Posterior cingulate gyrus (tissue), 11 donors: ENCODE measurements at regions of chr14 and their contacts with region 1.

Region 1: DNA sequence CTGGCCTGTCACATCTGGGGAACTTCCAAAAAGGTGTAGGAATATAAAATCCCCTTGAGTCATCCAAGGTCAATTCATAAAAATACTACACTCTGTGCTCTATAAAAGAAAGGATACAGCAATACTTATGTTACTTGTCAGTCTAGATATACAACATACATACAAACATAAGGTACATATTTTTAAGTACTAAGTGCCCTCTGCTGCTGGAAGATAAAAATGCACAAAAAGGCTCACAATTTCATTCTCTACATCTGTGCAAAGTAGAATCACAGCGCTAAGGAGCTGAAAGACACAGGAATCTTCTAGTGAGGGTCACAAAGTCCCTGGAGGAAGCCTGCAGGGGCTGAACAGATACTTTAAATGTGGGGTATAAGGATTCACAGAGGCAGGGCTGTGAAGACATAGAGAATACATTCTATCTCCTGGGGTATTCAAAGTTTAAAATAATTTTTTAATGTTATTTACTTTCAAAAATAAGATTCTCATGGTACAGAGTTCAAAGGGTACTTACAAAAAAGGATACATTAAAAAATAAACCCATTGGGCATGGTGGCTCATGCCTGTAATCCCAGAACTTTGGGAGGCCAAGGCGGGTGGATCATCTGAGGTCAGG is 10.2 kb upstream of the GOLGA5 start:
- DNase-seq: no peak

Region 2: DNA sequence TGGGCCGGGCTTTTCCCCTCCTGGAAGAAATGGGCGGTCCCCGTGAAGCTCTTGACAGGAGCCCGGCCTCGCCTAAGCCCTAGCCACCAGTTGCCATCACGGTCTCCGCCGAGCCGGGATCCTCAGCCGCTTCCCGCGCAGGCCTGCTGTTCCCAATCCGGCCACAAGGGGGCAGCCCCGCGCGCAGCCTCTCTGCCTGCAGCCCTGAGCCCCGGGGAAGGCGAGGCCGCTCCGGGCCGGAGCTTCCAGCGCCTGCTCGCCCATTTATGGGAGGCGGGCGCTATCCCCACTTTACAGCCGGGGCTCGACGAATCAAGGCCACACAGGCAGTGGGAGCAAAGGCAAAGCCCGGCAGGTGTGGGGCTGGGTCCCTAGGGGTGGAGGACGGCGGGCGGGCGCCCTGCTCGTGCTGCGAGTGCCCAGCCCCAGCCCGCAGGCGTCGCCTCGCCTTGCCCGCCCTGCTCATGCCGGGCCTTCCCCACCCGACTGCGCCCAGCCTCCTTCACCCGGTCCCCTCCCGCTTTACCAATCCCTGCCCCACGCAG is 97.0 kb before region 1 on chr14:
- intact Hi-C with region 1: loop called (anchors 2 kb)
- DNase-seq: peak; percentile 72 to 97 (median 86)

Region 3: GRCh38 chr14:92717571-92718042 is 66.3 kb before region 1 on chr14:
- intact Hi-C with region 1: loop called (anchors 1 kb)
- DNase-seq: peak in 1 of 10 donors; percentile 58

Region 4: DNA sequence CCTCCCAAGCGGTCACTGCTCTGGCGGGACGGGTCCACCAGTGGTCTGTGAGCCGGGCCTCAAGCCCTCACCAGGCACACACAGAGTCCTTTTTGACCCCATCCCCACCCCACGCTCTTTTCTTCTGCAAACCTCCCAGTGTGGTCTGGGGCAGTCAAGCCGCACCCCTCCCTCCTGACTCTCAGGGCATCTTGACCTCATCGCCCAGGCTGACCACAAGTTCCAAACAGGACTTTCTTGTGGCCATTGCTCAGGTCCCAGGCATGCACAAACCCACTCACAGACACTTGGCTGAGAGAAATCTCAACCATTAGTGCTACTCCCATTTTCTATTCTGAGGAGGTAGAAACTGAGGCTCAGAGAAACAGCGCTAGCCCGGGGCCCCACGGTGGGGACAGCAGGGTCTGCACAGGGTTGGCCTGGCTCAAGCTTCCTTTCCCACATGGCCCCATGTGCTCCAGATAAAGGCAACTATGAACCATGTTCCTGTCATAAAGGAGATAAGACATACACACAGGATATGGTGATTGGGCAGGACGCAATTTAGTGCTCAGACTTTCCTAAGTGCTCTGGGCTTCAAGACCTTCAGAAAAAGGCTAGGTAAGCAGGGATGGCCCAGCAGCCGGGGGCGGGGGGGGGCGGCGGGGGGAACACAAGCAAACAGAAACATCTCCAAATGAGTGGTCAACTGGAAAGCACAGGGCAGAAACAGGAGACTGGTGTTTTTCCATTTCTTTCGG is 262.2 kb after region 1 on chr14:
- intact Hi-C with region 1: no loop called
- DNase-seq: no peak